Natural killer cell (primary cell): ENCODE measurements at regions of chr21 and their contacts with region 1.

Region 1: DNA sequence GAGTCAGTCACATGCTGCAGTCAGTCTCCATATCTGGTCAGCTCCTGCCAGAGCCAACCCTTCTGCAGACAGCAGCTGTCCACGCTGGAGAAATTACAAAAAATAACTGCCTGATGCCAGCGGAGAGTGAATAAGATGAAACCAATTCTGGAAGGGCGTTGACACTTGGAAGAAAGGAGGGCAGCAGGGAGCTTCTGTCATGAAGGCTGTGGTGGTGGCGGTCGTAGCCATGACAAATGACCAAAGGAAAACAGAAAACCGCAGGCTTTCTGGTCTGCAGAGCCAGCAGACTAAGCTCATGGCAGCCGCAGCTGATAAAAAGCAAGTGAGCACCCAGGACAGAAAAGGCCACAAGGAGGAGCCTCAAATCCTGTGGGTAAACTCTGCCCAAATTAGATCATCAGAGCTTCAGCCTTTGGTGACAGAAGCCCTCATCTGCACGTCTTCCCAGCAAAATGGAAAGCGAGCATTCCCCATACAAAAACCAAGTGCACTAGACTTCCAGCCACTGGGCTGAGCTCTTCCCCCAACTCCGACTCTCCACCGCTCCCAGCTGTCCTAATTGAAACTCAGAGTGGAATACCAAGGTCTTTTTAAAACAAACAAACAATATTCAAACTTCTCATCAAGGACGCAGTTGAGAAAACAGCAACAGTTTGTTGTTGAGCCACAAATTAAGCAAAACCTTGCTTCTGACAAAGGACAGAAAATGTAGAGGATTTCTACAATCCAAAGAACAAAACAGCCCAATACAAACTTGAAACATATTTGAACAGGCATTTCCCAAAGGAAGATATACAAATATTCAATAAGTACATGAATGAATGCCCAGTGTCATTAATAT is 28.7 kb downstream of the RSPH1 start:
- DNase-seq: peak in 1 of 2 donors; percentile 55
- ATAC-seq: no peak
- H3K4me3 ChIP-seq: no peak overlapping the region
- H3K4me3 Mint-ChIP-seq: no peak overlapping the region
- H3K27ac ChIP-seq: no peak overlapping the region
- H3K27ac Mint-ChIP-seq: peak overlapping the region; percentile 10 to 30
- H3K4me1 ChIP-seq: peaks cover 36% of the 10 kb centered on the region
- H3K4me1 Mint-ChIP-seq: peaks cover 42 to 43% of the 10 kb centered on the region in 2 donors
- H3K27me3 ChIP-seq: no peaks in the 10 kb centered on the region
- H3K27me3 Mint-ChIP-seq: peaks cover 19 to 28% of the 10 kb centered on the region in 2 donors
- CTCF ChIP-seq: no peak

Region 2: GRCh38 chr21:42496122-42496900 is 28.9 kb after region 1 on chr21 and contains the start of gene RSPH1:
- intact Hi-C with region 1: loop called (anchors 2 kb)
- DNase-seq: peak; percentile 98 to 99
- ATAC-seq: peak; percentile 95 to 99 (median 96)
- H3K4me3 ChIP-seq: peak within 1 kb of the TSS; percentile 48
- H3K4me3 Mint-ChIP-seq: peak within 1 kb of the TSS; percentile 94
- H3K27ac ChIP-seq: peak within 1 kb of the TSS; percentile 65
- H3K27ac Mint-ChIP-seq: peak within 1 kb of the TSS; percentile 90
- H3K4me1 ChIP-seq: peaks cover 17% of the 10 kb centered on the region
- H3K4me1 Mint-ChIP-seq: peaks cover 13 to 15% of the 10 kb centered on the region in 2 donors
- H3K27me3 ChIP-seq: no peaks in the 10 kb centered on the region
- H3K27me3 Mint-ChIP-seq: peaks cover 5 to 9% of the 10 kb centered on the region in 2 donors
- CTCF ChIP-seq: no peak
- total RNA-seq, gene RSPH1: 0.16 TPM in 1 of 3 donors, not detected in the others

Region 3: GRCh38 chr21:42513985-42514882 is 46.9 kb after region 1 on chr21:
- intact Hi-C with region 1: loop called (anchors 5 kb)
- DNase-seq: peak; percentile 61 to 79
- ATAC-seq: peak; percentile 73 to 78 (median 75)
- H3K4me3 ChIP-seq: peak overlapping the region; percentile 59
- H3K4me3 Mint-ChIP-seq: peak overlapping the region; percentile 82
- H3K27ac ChIP-seq: peak overlapping the region; percentile 71
- H3K27ac Mint-ChIP-seq: peak overlapping the region; percentile 36 to 81
- H3K4me1 ChIP-seq: peaks cover 13% of the 10 kb centered on the region
- H3K4me1 Mint-ChIP-seq: peaks cover 20 to 31% of the 10 kb centered on the region in 2 donors
- H3K27me3 ChIP-seq: no peaks in the 10 kb centered on the region
- H3K27me3 Mint-ChIP-seq: no peaks in the 10 kb centered on the region
- CTCF ChIP-seq: no peak